ENCODE measurements at regions of chr2 and their contacts with region 1.

Region 1: DNA sequence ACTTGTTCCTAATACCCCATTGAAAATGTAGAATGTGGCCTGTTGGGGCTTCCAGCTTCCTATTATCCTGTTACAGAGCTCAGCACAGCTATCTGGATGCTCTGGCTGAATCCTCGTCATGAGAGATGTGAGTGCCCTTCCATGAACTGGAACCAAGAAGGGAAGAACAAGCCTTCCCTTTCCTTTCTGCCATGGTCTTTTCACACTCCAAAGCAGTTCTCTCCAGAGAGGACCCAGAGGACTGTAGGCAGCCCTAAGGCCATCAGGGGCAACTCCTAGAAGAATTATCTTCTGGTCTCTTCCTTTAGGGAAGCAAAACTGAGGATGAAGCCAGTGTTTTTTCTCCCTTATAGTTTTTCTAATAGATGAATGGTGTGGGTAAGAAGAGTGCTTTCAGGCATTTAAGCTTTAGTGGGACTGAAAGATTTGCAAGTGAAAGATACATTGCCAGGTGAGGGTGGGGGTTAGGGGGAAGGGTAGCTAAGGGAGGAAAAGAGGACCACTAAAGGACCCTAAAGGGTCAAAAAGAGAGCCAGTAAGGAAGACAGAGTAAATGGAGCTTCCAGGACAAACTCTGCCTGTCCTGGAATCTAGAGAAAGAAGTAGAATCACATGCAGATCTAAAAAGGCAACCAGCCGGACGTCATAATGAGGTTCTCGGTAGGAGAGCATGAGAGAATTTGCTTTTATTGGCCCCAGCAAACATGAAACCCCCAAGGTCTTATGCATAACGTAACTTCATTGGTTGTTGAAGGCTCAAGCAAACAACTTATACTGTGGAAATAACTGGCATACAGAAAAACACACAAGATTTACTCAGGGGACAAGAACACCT is 12.4 kb upstream of the XPO1 start:
- DNase-seq: no peak
- H3K4me3 ChIP-seq: no peak overlapping the region
- CTCF ChIP-seq: no peak
- POLR2A ChIP-seq: no peak

Region 2: GRCh38 chr2:61597300-61598289 is 47.0 kb after region 1 on chr2:
- intact Hi-C with region 1: no loop called
- DNase-seq: no peak
- H3K4me3 ChIP-seq: no peak overlapping the region
- CTCF ChIP-seq: no peak
- POLR2A ChIP-seq: no peak

Region 3: GRCh38 chr2:61736953-61737352 is 186.4 kb after region 1 on chr2:
- intact Hi-C with region 1: loop called (anchors 5 kb)
- DNase-seq: no peak
- H3K4me3 ChIP-seq: no peak overlapping the region
- CTCF ChIP-seq: no peak
- POLR2A ChIP-seq: no peak

Region 4: GRCh38 chr2:62501794-62502500 is 951.4 kb after region 1 on chr2:
- intact Hi-C with region 1: no loop called
- DNase-seq: no peak
- H3K4me3 ChIP-seq: no peak overlapping the region
- CTCF ChIP-seq: no peak
- POLR2A ChIP-seq: no peak

Measured in lower leg skin (tissue), 4 donors.